Vagina (tissue), 2 donors: ENCODE measurements at regions of chr10 and their contacts with region 1.

Region 1: GRCh38 chr10:60114765-60115586 is 208.6 kb upstream of the CCDC6 start:
- DNase-seq: no peak
- H3K4me3 ChIP-seq: no peak overlapping the region
- H3K27ac ChIP-seq: no peak overlapping the region
- H3K4me1 ChIP-seq: no peaks in the 10 kb centered on the region
- H3K27me3 ChIP-seq: no peaks in the 10 kb centered on the region
- CTCF ChIP-seq: peak in 1 of 3 experiments; percentile 31
- POLR2A ChIP-seq: no peak

Region 2: GRCh38 chr10:60208676-60209269 is 93.8 kb after region 1 on chr10:
- intact Hi-C with region 1: loop called (anchors 10 kb)
- DNase-seq: no peak
- H3K4me3 ChIP-seq: no peak overlapping the region
- H3K27ac ChIP-seq: no peak overlapping the region
- H3K4me1 ChIP-seq: no peaks in the 10 kb centered on the region
- H3K27me3 ChIP-seq: no peaks in the 10 kb centered on the region
- CTCF ChIP-seq: peak; percentile 41 to 50 (median 47)
- POLR2A ChIP-seq: no peak

Region 3: DNA sequence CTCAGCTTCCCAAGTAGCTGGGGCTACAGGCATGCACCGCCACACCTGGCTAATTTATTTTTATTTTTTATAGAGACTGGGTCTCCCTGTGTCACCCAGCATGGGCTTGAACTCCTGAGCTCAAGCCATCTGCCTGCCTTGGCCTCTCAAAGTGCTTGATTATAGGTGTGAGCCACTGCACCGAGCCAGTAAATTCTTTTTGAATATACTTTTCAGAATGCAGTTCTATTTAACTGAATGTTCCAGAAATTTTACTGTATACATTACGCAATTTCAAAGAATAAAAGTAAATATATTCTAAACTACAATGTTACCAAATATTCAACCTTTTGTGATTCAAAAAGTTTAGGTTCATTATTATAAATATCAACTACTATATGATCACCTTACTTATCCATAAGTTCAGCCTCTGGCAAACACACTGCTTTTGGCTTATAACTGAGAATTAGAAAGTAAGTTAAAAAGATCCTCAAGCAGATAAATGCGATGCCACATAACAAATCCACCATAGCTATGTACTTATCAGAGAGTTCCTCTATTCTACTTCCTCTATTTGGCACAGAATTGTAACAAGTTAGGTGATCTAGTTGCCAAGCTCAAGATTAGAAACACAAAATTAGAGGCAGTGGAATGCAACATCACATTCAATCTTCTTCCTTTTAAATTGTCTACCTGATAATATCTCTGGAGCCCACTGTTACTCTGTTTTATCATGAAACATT is 156.5 kb after region 1 on chr10:
- intact Hi-C with region 1: no loop called
- DNase-seq: no peak
- H3K4me3 ChIP-seq: no peak overlapping the region
- H3K27ac ChIP-seq: no peak overlapping the region
- H3K4me1 ChIP-seq: no peaks in the 10 kb centered on the region
- H3K27me3 ChIP-seq: no peaks in the 10 kb centered on the region
- CTCF ChIP-seq: no peak
- POLR2A ChIP-seq: no peak

Region 4: GRCh38 chr10:60541451-60541850 is 426.5 kb after region 1 on chr10:
- intact Hi-C with region 1: no loop called
- DNase-seq: no peak
- H3K4me3 ChIP-seq: no peak overlapping the region
- H3K27ac ChIP-seq: no peak overlapping the region
- H3K4me1 ChIP-seq: no peaks in the 10 kb centered on the region
- H3K27me3 ChIP-seq: no peaks in the 10 kb centered on the region
- CTCF ChIP-seq: no peak
- POLR2A ChIP-seq: no peak